ENCODE measurements at regions of chr10 and their contacts with region 1.

Region 1: DNA sequence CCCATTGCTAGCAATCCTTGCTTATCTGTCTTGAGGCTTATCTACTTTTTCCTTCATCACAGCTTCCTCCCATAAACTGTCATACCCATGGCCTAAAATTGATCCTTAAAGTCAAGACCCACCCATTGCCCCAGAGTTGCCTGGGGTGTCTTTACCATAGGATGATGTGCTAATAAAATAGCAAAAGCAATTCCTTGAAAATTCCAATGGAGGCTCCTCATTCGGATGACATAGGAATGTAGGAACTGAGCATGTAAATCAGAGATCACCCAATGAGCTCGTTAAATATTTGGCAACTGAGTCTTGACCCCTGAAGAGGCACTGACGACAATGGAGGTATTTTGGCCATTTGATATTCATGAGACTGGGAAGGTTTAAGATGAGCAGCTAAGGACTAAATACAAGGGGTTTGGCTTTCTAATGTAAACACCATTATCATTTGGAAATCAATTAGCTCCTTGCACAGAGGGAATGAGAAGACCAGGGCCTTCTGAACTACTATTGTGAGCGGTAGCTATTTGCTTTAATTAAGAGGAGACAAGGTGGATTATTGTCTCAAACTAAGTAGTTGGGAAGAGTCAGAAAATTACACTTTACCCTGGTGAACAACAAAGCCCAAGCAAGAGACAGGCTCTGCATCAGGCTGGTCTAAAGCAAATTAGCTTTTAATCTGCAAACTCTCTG is 234.9 kb downstream of the GATA3 start:
- DNase-seq: no peak
- ATAC-seq: no peak
- H3K4me3 ChIP-seq: no peak overlapping the region
- H3K27ac ChIP-seq: no peak overlapping the region
- H3K4me1 ChIP-seq: no peaks in the 10 kb centered on the region
- H3K27me3 ChIP-seq: no peaks in the 10 kb centered on the region
- CTCF ChIP-seq: no peak

Region 2: DNA sequence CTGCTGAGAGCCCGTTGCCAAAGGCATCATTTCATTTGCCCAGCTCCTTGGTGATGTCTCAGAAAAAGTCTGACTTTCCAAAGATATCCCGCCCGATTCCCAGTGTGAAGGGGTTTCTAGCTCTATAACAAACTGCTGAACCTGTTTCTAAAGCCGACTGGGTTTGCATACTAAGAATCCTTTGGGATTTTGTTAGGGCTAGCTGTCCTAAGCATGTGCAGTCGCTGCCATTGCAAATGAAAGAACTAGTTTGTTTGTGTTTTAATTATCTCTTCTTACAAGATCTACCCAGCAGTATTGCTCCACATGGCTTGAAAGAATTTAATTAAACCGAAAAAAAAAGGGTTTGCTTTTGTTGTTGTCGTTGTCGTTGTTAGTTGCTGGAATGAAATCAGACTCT is 241.7 kb after region 1 on chr10:
- CTCF ChIA-PET with region 1: no interaction called
- POLR2A ChIA-PET with region 1: interaction called, 10 read pairs
- in situ Hi-C with region 1: no loop called
- intact Hi-C with region 1: no loop called
- DNase-seq: no peak
- ATAC-seq: no peak
- H3K4me3 ChIP-seq: no peak overlapping the region
- H3K27ac ChIP-seq: no peak overlapping the region
- H3K4me1 ChIP-seq: no peaks in the 10 kb centered on the region
- H3K27me3 ChIP-seq: no peaks in the 10 kb centered on the region
- CTCF ChIP-seq: no peak

Region 3: DNA sequence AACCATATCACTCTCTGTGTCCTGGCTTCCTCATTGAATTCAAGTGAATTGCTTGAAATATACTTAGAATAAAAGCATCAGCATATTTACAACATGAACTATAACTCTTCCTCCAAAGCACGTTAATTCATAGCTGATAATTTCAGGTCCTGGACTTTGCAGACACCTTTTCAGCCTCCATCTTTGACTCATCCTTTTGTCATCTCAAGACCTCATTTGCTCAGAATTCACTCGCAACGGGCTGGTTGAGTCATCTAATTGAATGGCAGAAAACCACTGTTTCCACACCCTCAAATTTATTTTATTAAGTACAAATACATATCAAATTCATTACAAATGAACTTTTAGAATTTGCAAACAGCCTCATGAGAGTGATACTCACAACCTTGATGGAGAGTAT is 310.8 kb after region 1 on chr10:
- CTCF ChIA-PET with region 1: no interaction called
- POLR2A ChIA-PET with region 1: no interaction called
- in situ Hi-C with region 1: no loop called
- intact Hi-C with region 1: no loop called
- DNase-seq: no peak
- ATAC-seq: no peak
- H3K4me3 ChIP-seq: no peak overlapping the region
- H3K27ac ChIP-seq: no peak overlapping the region
- H3K4me1 ChIP-seq: no peaks in the 10 kb centered on the region
- H3K27me3 ChIP-seq: no peaks in the 10 kb centered on the region
- CTCF ChIP-seq: no peak